ENCODE measurements at regions of chr1 and their contacts with region 1.

Region 1: GRCh38 chr1:119275145-119276134 is 93.1 kb upstream of the HAO2 start:
- DNase-seq: peak; percentile 37 to 39
- H3K4me3 ChIP-seq: no peak overlapping the region
- H3K4me3 Mint-ChIP-seq: no peak overlapping the region
- H3K27ac Mint-ChIP-seq: no peak overlapping the region
- H3K4me1 ChIP-seq: peaks cover 7% of the 10 kb centered on the region; the same call in 1 of the 2 replicates
- H3K4me1 Mint-ChIP-seq: no peaks in the 10 kb centered on the region
- H3K27me3 ChIP-seq: no peaks in the 10 kb centered on the region
- H3K27me3 Mint-ChIP-seq: no peaks in the 10 kb centered on the region
- CTCF ChIP-seq: peak; percentile 49 to 66

Region 2: DNA sequence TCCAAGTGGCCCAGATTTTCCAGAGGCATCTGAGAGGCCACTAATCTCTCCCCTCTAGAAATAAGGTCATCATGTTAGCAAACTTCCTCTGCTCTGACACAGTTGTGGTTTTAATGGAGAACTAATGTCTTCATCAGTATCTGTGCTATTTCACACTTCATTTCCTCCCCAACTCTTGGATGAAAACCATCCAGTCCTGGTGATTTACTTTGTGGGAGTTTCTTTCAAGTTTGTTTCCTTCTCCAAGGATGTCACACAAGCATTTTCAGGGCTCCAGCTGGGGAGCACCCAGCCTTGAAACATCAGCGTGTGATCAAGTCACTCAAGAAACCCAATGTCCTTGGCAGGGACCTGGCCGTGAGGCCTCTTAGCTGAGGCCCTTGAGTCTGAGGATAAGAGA is 326.1 kb before region 1 on chr1:
- CTCF ChIA-PET with region 1: no interaction called
- POLR2A ChIA-PET with region 1: no interaction called
- intact Hi-C with region 1: no loop called
- DNase-seq: no peak
- H3K4me3 ChIP-seq: no peak overlapping the region
- H3K4me3 Mint-ChIP-seq: no peak overlapping the region
- H3K27ac Mint-ChIP-seq: no peak overlapping the region
- H3K4me1 ChIP-seq: no peaks in the 10 kb centered on the region
- H3K4me1 Mint-ChIP-seq: no peaks in the 10 kb centered on the region
- H3K27me3 ChIP-seq: no peaks in the 10 kb centered on the region
- H3K27me3 Mint-ChIP-seq: peaks cover 3% of the 10 kb centered on the region
- CTCF ChIP-seq: no peak

Region 3: GRCh38 chr1:119008483-119009311 is 266.7 kb before region 1 on chr1:
- CTCF ChIA-PET with region 1: no interaction called
- POLR2A ChIA-PET with region 1: no interaction called
- intact Hi-C with region 1: loop called (anchors 10 kb)
- DNase-seq: peak in 1 of 2 experiments; percentile 38
- H3K4me3 ChIP-seq: no peak overlapping the region
- H3K4me3 Mint-ChIP-seq: no peak overlapping the region
- H3K27ac Mint-ChIP-seq: no peak overlapping the region
- H3K4me1 ChIP-seq: no peaks in the 10 kb centered on the region
- H3K4me1 Mint-ChIP-seq: no peaks in the 10 kb centered on the region
- H3K27me3 ChIP-seq: no peaks in the 10 kb centered on the region
- H3K27me3 Mint-ChIP-seq: no peaks in the 10 kb centered on the region
- CTCF ChIP-seq: peak; percentile 2 to 28

Region 4: DNA sequence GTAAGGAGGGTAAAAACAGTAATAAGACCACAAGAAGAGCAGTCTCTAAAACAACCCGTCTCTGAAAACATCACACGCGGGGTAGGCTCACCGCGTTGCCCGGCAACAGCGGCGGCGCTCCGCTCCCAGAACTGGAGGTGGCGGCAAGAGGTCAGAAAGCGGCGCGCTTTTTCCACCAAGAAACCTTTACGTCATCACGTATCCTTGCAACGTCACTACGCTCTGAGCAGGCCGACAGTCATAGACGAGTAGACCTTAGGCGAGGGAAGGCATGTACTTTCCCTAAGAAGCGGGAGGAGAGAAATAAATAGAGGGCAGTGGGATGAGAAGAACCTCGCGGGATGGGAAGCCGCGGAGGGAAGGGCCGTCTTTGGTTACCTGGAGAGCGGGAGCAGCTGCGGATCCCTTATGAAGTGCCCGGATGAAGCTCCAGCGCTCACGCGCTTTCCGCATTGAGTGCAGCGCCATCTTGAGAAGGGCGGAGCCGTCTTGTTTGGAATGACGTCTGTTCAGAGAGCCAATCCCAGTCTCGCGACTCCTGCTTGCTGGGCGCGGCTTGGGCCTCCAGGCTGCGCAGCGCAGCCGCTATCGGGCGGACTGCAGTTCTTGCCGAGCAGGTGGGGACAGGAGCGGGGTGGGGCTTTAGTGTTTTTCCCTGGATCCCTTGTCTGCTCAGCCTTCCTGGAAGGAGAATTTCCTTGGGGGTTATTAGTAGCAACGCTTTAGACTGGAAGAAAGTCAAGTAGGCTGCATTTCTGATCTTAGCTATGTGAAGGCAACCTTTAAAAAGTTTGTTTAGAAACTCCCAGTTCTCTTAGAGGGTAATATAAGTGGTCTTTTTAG is 135.0 kb before region 1 on chr1 and contains the start of gene WARS2:
- CTCF ChIA-PET with region 1: no interaction called
- POLR2A ChIA-PET with region 1: no interaction called
- intact Hi-C with region 1: loop called (anchors 5 kb)
- DNase-seq: peak; percentile 92 to 96
- H3K4me3 ChIP-seq: peak within 1 kb of the TSS; percentile 45
- H3K4me3 Mint-ChIP-seq: no peak within 1 kb of the TSS
- H3K27ac Mint-ChIP-seq: no peak within 1 kb of the TSS
- H3K4me1 ChIP-seq: peaks cover 17% of the 10 kb centered on the region; the same call in 1 of the 2 replicates
- H3K4me1 Mint-ChIP-seq: peaks cover 9% of the 10 kb centered on the region
- H3K27me3 ChIP-seq: no peaks in the 10 kb centered on the region
- H3K27me3 Mint-ChIP-seq: no peaks in the 10 kb centered on the region
- CTCF ChIP-seq: no peak
- total RNA-seq, gene WARS2: 11.9 and 12.1 TPM in 2 replicates

Region 5: DNA sequence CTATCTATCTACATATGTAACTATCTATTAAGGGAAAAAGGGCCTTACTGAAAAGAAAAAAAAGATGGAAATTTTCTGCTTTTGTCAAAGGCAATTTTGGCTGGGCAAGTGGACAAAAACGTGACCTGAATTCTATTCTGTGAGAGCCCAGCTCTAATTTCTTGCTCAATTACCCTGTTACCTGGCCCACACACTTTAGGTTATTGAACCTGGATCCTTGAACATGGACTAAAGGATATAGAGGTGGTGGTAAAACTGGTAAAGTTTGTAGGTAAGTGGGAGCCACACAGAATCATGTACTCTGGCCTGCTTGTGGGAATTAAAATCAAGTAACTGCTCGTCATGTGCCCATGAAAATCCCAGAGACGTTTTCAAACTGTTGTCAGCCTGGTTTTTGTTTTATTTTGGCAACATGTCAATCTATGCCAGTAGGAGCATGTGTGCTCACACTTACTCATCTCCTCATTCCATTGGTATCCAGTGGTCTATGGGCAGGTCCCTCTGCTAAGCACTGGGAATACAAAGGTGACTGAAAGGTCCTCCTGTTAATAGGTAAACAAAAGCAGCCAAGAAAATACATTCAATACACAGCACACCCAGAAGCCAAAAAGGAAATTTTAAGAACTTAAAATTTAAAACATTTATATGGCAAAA is 21.2 kb before region 1 on chr1:
- CTCF ChIA-PET with region 1: no interaction called
- POLR2A ChIA-PET with region 1: no interaction called
- intact Hi-C with region 1: no loop called
- DNase-seq: no peak
- H3K4me3 ChIP-seq: no peak overlapping the region
- H3K4me3 Mint-ChIP-seq: no peak overlapping the region
- H3K27ac Mint-ChIP-seq: no peak overlapping the region
- H3K4me1 ChIP-seq: no peaks in the 10 kb centered on the region
- H3K4me1 Mint-ChIP-seq: no peaks in the 10 kb centered on the region
- H3K27me3 ChIP-seq: no peaks in the 10 kb centered on the region
- H3K27me3 Mint-ChIP-seq: no peaks in the 10 kb centered on the region
- CTCF ChIP-seq: no peak

Region 6: DNA sequence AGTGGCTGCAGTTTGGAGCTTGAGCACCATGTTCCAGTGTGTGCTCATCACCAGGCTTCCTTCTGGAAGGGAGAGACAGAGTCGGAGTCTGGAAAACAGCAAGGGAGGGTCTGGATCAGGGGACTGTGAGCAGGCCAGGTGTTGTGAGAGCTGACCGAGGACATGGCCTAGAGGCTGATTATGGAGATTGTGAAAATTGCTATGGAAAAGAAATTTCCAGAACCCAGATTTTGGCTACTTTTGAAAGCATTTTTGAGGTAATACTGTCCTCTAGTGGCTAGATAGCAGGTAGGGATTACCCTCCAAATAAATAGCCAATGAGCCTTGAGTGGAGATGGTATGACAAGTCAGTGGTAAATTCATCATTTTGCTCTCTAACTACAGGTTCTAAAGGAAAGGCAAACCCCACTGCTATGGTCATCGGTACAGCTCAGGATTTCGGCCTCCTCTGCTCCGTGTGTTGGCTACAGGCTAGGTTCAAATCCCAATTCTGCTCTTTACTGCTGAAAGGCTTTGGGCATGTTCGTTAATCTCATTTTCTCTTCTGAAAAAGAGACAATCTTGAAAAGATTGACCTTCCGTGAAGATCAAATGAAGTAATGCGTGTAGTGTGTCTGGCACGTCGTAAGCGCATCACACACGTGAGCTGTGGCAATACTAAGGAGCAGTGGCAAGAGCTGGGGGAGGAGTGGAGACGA is 92.1 kb after region 1 on chr1:
- CTCF ChIA-PET with region 1: interaction called, 5 read pairs
- POLR2A ChIA-PET with region 1: no interaction called
- intact Hi-C with region 1: loop called (anchors 1 kb)
- DNase-seq: peak in 1 of 2 experiments; percentile 21
- H3K4me3 ChIP-seq: no peak overlapping the region
- H3K4me3 Mint-ChIP-seq: no peak overlapping the region
- H3K27ac Mint-ChIP-seq: no peak overlapping the region
- H3K4me1 ChIP-seq: no peaks in the 10 kb centered on the region
- H3K4me1 Mint-ChIP-seq: no peaks in the 10 kb centered on the region
- H3K27me3 ChIP-seq: no peaks in the 10 kb centered on the region
- H3K27me3 Mint-ChIP-seq: no peaks in the 10 kb centered on the region
- CTCF ChIP-seq: peak; percentile 65 to 87

Measured in Caco-2 (cell line).